Pancreas (tissue), 10 donors: ENCODE measurements at regions of chr20 and their contacts with region 1.

Region 1: DNA sequence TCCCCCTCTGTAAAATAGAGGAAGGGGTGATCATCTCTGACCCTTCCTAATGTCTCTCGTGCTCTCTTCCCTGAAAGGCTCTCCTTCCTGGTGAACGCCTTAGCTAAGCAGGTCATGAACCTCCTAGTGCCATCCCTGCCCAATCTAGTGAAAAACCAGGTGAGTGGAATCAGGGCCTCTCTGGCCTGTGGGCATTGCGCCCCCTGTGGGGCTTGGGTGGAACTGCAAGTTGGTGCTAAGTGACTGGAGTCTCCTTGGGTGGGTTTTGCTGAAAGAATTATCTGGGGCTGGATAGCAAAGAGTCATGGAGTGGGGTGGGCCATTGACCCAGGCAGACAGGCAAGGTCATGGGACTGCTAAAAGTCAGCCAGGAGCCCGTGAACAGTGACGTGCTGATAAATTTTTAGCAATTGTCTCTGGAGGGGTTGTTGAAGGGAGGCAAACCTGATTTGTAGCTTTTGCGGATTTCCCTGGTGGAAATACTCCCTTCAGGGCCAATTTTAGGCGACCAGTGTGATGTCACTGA is 8.9 kb downstream of the BPIFB1 start:
- DNase-seq: peak; percentile 24 to 88 (median 64)
- ATAC-seq: peak in 3 of 4 donors; percentile 76 to 82 (median 79)
- H3K4me3 ChIP-seq: no peak overlapping the region
- H3K27ac ChIP-seq: no peak overlapping the region
- H3K4me1 ChIP-seq: no peaks in the 10 kb centered on the region
- H3K27me3 ChIP-seq: peaks cover 0 to 2% (median 0%) of the 10 kb centered on the region in 4 donors
- CTCF ChIP-seq: peak; percentile 81 to 93 (median 90)

Region 2: GRCh38 chr20:32908334-32909292 is 383.3 kb before region 1 on chr20:
- intact Hi-C with region 1: loop called in 1 of 3 experiments (anchors 5 kb)
- DNase-seq: peak in 1 of 6 donors; percentile 46
- ATAC-seq: no peak
- H3K4me3 ChIP-seq: no peak overlapping the region
- H3K27ac ChIP-seq: no peak overlapping the region
- H3K4me1 ChIP-seq: no peaks in the 10 kb centered on the region
- H3K27me3 ChIP-seq: no peaks in the 10 kb centered on the region
- CTCF ChIP-seq: no peak

Region 3: DNA sequence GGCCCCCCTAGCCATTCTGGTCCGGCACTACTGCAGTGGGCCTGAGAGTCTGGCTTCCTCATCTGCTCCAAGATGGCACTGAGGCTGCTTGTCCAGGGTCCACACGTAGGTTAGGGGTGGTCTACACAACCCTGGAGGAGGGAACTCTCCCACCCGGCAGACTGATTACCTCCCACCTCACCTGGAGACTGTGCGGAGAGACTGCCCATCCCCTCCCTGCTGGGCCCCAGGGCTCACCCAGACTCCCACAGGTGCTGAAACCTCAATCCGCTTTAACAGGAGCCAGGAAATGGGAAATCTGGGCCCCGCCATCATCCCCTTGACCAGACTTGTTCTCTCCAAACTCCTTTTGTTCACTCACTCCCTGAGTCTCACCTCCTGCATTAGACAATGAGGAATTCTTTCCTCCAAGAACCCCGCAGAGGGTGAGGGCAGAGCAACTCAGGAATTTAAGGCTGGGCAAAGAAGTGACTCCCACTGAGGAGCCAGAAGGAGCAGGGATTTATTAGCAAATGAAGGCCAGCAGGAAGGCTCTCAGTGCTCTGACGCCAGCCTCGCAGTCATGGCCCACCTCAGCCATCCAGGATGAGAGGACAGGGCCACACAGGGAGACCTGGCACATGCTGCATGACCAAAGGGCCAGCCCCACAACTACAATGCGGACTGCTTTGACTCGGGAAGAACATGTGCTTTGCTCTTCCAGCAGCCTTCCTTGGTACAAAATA is 56.4 kb after region 1 on chr20:
- intact Hi-C with region 1: no loop called
- DNase-seq: peak in 1 of 6 donors; percentile 18
- ATAC-seq: no peak
- H3K4me3 ChIP-seq: no peak overlapping the region
- H3K27ac ChIP-seq: no peak overlapping the region
- H3K4me1 ChIP-seq: no peaks in the 10 kb centered on the region
- H3K27me3 ChIP-seq: no peaks in the 10 kb centered on the region
- CTCF ChIP-seq: no peak